CD8-positive, alpha-beta T cell (primary cell): ENCODE measurements at regions of chr9 and their contacts with region 1.

Region 1: DNA sequence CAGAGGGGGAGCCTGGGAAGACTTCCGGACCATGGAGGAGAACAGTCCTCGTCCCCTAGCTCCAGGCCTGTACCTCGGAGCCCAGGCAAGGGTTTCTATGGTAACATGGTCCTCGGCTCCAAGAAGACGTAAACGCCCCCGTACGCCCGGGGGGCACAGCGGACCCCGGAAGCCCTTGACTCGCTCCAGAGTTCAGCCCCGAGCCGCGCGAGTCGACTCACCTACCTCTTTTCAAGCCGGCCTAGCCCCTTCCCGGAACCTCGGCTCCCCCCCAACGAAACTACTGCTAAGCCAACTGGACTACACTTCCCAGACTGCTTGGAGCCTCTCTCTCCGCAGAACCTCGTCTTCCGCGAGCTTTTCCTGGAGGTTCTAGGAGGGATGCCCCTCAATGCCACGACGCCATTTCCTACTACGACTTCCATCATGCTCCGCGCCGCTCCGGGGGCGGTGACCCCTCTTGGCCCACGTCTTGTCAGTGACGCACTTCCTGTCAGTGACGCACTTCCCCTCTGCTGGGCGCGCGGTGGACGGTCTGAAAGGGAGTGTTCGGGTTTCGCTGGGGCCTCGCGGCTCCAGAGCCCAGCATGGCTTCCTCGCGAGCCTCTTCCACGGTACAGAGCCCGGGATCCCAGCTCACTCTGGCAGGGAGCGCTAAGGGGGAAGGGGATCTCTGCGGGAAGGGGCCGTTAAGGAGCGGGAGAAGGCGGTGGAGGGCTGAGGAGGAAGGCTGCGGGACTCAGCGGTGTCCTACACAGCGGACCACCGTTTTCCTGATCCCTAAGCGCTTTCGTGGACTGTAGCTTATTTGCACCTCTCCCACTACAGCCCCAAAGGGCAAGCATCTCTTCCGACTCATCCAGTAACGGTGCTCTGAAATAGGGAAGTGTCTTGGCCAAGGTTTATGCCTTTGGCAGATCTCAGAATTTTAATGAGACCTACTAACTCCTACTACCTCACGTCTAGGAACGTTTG is at the starts of genes CDC26 and PRPF4:
- DNase-seq: peak; percentile 87 to 99 (median 95)
- ATAC-seq: peak; percentile 89
- H3K4me3 ChIP-seq: peak within 1 kb of the TSS; percentile 78 to 97
- H3K4me3 Mint-ChIP-seq: no peak within 1 kb of the TSS
- H3K27ac ChIP-seq: peak within 1 kb of the TSS; percentile 92 to 97
- H3K27ac Mint-ChIP-seq: no peak within 1 kb of the TSS
- H3K4me1 ChIP-seq: peaks cover 12% of the 10 kb centered on the region
- H3K4me1 Mint-ChIP-seq: peaks cover 46% of the 10 kb centered on the region
- H3K27me3 ChIP-seq: no peaks in the 10 kb centered on the region
- H3K27me3 Mint-ChIP-seq: no peaks in the 10 kb centered on the region
- CTCF ChIP-seq: no peak
- total RNA-seq, gene CDC26: 13.1 TPM
- total RNA-seq, gene PRPF4: 24.4 to 24.8 TPM

Region 2: DNA sequence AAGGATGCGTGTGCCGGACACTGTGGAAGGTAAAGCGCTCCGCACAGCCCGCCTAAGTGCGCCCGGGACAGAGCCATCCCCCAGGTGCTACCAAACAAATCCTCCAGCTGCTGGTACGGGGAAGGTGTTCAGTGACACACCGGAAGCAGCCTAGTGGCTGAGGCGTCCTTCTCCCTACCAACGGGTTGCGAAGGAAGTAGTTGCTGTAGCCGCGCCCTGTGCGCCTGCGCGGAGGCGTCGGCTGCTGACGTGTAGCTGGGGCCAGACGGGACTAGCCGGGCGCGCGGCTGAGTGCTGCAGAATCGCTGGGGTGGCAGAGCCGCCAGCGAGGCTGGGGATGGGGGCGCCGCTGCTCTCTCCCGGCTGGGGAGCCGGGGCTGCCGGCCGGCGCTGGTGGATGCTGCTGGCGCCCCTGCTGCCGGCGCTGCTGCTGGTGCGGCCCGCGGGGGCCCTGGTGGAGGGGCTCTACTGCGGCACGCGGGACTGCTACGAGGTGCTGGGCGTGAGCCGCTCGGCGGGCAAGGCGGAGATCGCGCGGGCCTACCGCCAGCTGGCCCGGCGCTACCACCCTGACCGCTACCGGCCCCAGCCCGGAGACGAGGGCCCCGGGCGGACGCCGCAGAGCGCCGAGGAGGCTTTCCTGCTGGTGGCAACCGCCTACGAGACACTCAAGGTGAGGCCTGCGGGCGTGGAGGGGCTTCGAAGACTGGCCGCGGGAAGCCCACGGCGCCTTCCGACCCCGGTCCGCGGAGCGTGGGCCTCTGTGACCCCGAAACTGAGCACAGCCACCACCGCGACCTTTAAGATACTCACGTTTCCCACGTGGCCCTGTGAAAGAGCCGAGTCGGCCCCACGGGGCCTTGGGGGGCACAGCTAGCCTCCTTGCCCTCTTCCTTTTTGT is 1644.1 kb before region 1 on chr9 and contains the start of gene DNAJC25:
- CTCF ChIA-PET with region 1: interaction called, 3 read pairs
- POLR2A ChIA-PET with region 1: no interaction called
- intact Hi-C with region 1: loop called in 1 of 2 experiments (anchors 5 kb)
- DNase-seq: peak; percentile 92 to 99 (median 96)
- ATAC-seq: peak; percentile 94
- H3K4me3 ChIP-seq: peak within 1 kb of the TSS; percentile 50 to 69
- H3K4me3 Mint-ChIP-seq: peak within 1 kb of the TSS; percentile 98
- H3K27ac ChIP-seq: peak within 1 kb of the TSS; percentile 78 to 80
- H3K27ac Mint-ChIP-seq: peak within 1 kb of the TSS; percentile 92
- H3K4me1 ChIP-seq: peaks cover 18% of the 10 kb centered on the region
- H3K4me1 Mint-ChIP-seq: peaks cover 47% of the 10 kb centered on the region
- H3K27me3 ChIP-seq: no peaks in the 10 kb centered on the region
- H3K27me3 Mint-ChIP-seq: no peaks in the 10 kb centered on the region
- CTCF ChIP-seq: no peak
- total RNA-seq, gene DNAJC25: 5.8 to 7.2 TPM

Region 3: DNA sequence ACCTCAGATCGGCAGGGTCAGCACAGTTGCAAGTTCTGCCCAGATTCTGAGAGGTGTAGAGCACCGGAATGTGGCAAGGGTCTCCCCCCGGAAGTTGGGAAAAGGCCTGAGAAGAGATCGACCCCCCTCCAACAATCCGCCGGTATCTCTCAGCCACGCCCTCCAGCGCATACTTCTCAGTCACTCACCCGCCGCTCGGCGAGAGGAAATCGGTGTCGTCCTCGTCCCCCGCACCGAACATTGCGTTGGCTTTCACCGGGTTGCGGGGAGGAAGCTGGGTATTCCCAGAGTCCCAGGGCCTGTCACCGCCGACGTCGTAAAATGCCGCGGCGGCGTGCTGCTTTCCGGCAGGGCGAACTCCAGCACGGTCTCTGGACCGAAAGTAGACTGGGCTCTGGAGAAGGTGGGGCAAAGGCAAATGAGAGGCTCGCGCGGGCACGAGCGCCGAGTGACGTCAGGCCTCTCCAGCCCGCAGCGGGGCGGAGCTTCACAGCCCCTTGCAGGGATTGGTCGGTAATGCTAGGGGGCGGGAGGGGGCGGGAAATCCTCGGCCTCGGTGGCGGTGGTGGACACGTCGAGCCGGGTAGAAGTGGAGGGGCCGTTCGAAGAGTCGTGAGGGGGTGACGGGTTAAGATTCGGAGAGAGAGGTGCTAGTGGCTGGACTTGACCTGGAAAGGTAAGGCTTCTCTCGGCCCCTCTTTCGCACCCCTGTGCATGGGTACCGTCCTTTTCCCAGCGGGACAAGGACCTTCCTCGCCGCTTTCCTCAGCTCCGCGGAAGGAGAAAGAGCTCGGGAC is 54.2 kb before region 1 on chr9 and contains the starts of genes FKBP15 and SLC31A1:
- CTCF ChIA-PET with region 1: interaction called, 5 read pairs
- POLR2A ChIA-PET with region 1: interaction called, 3 read pairs
- intact Hi-C with region 1: loop called (anchors 1 kb)
- DNase-seq: peak; percentile 91 to 99 (median 95)
- ATAC-seq: peak; percentile 99
- H3K4me3 ChIP-seq: peak within 1 kb of the TSS; percentile 84 to 94
- H3K4me3 Mint-ChIP-seq: peak within 1 kb of the TSS; percentile 95
- H3K27ac ChIP-seq: peak within 1 kb of the TSS; percentile 71 to 90
- H3K27ac Mint-ChIP-seq: peak within 1 kb of the TSS; percentile 94
- H3K4me1 ChIP-seq: peaks cover 22% of the 10 kb centered on the region
- H3K4me1 Mint-ChIP-seq: peaks cover 57% of the 10 kb centered on the region
- H3K27me3 ChIP-seq: no peaks in the 10 kb centered on the region
- H3K27me3 Mint-ChIP-seq: no peaks in the 10 kb centered on the region
- CTCF ChIP-seq: no peak
- total RNA-seq, gene FKBP15: 8.7 to 8.9 TPM
- total RNA-seq, gene SLC31A1: 8.7 to 9.6 TPM

Region 4: GRCh38 chr9:113340017-113340699 is 64.7 kb after region 1 on chr9 and contains the start of gene WDR31:
- CTCF ChIA-PET with region 1: interaction called, 13 read pairs
- POLR2A ChIA-PET with region 1: interaction called, 4 read pairs
- intact Hi-C with region 1: loop called (anchors 1 kb)
- DNase-seq: peak; percentile 58 to 90 (median 78)
- ATAC-seq: peak; percentile 99
- H3K4me3 ChIP-seq: peak within 1 kb of the TSS; percentile 70 to 83
- H3K4me3 Mint-ChIP-seq: peak within 1 kb of the TSS; percentile 83
- H3K27ac ChIP-seq: peak within 1 kb of the TSS in 1 of 2 experiments; percentile 46
- H3K27ac Mint-ChIP-seq: no peak within 1 kb of the TSS
- H3K4me1 ChIP-seq: peaks cover 19% of the 10 kb centered on the region
- H3K4me1 Mint-ChIP-seq: peaks cover 24% of the 10 kb centered on the region
- H3K27me3 ChIP-seq: peaks cover 0 to 3% of the 10 kb centered on the region in 2 experiments
- H3K27me3 Mint-ChIP-seq: peaks cover 2% of the 10 kb centered on the region
- CTCF ChIP-seq: no peak
- total RNA-seq, gene WDR31: 0.11 to 0.43 TPM

Region 5: DNA sequence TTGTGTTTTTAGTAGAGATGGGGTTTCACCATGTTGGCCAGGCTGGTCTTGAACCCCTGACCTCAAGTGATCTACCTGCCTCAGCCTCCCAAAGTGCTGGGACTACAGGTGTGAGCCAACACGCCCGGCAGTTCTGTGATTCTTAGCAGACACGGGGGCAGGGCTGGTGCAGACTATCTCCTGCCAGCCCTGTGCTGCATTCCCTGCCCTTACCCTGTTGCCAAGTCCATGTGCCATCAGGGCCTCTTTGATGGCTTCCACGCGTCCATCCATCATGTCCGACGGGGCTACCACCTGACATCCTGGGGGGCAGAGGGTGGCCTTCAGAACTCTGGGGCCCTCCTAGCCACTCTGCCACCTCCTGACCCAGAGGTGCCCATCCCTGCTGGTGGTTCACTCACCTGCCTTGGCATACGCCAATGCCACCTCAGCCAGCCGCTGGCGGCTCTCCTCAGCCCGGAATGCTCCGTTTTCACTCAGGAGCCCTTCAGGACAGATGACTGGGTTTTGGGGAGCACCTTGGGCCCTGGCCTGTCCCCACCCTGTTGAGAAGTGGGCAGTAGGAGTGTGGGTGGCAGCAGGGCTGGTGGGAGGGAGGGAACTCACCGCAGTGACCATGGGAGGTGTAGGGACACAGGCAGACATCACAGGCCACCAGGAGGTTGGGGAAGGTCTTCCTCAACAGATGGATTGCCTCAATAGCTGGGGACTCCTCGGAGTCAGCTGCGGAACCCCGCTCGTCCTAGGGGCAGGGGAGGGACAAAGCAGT is 114.9 kb after region 1 on chr9:
- CTCF ChIA-PET with region 1: no interaction called
- POLR2A ChIA-PET with region 1: no interaction called
- intact Hi-C with region 1: no loop called
- DNase-seq: no peak
- ATAC-seq: no peak
- H3K4me3 ChIP-seq: no peak overlapping the region
- H3K4me3 Mint-ChIP-seq: no peak overlapping the region
- H3K27ac ChIP-seq: no peak overlapping the region
- H3K27ac Mint-ChIP-seq: no peak overlapping the region
- H3K4me1 ChIP-seq: no peaks in the 10 kb centered on the region
- H3K4me1 Mint-ChIP-seq: no peaks in the 10 kb centered on the region
- H3K27me3 ChIP-seq: no peaks in the 10 kb centered on the region
- H3K27me3 Mint-ChIP-seq: no peaks in the 10 kb centered on the region
- CTCF ChIP-seq: no peak

Region 6: GRCh38 chr9:113410207-113410864 is 134.9 kb after region 1 on chr9 and contains the starts of genes C9orf43 and POLE3:
- CTCF ChIA-PET with region 1: interaction called, 32 read pairs
- POLR2A ChIA-PET with region 1: interaction called, 12 read pairs
- intact Hi-C with region 1: loop called (anchors 1 kb)
- DNase-seq: peak; percentile 90 to 97 (median 94)
- ATAC-seq: peak; percentile 88
- H3K4me3 ChIP-seq: peak within 1 kb of the TSS; percentile 88 to 94
- H3K4me3 Mint-ChIP-seq: peak within 1 kb of the TSS; percentile 99
- H3K27ac ChIP-seq: peak within 1 kb of the TSS; percentile 84 to 99
- H3K27ac Mint-ChIP-seq: peak within 1 kb of the TSS; percentile 99
- H3K4me1 ChIP-seq: peaks cover 22% of the 10 kb centered on the region
- H3K4me1 Mint-ChIP-seq: peaks cover 29% of the 10 kb centered on the region
- H3K27me3 ChIP-seq: no peaks in the 10 kb centered on the region
- H3K27me3 Mint-ChIP-seq: no peaks in the 10 kb centered on the region
- CTCF ChIP-seq: no peak
- total RNA-seq, gene C9orf43: 0.61 to 0.73 TPM
- total RNA-seq, gene POLE3: 77.4 to 79.3 TPM

Region 7: GRCh38 chr9:113523421-113524236 is 248.2 kb after region 1 on chr9:
- CTCF ChIA-PET with region 1: interaction called, 3 read pairs
- POLR2A ChIA-PET with region 1: no interaction called
- intact Hi-C with region 1: loop called (anchors 5 to 10 kb)
- DNase-seq: peak in 8 of 9 experiments; percentile 46 to 87 (median 66)
- ATAC-seq: peak; percentile 27
- H3K4me3 ChIP-seq: peak overlapping the region; percentile 31 to 40
- H3K4me3 Mint-ChIP-seq: peak overlapping the region; percentile 80
- H3K27ac ChIP-seq: peak overlapping the region; percentile 19 to 78
- H3K27ac Mint-ChIP-seq: peak overlapping the region; percentile 94
- H3K4me1 ChIP-seq: peaks cover 97% of the 10 kb centered on the region
- H3K4me1 Mint-ChIP-seq: peaks cover 92% of the 10 kb centered on the region
- H3K27me3 ChIP-seq: no peaks in the 10 kb centered on the region
- H3K27me3 Mint-ChIP-seq: no peaks in the 10 kb centered on the region
- CTCF ChIP-seq: no peak

Region 8: DNA sequence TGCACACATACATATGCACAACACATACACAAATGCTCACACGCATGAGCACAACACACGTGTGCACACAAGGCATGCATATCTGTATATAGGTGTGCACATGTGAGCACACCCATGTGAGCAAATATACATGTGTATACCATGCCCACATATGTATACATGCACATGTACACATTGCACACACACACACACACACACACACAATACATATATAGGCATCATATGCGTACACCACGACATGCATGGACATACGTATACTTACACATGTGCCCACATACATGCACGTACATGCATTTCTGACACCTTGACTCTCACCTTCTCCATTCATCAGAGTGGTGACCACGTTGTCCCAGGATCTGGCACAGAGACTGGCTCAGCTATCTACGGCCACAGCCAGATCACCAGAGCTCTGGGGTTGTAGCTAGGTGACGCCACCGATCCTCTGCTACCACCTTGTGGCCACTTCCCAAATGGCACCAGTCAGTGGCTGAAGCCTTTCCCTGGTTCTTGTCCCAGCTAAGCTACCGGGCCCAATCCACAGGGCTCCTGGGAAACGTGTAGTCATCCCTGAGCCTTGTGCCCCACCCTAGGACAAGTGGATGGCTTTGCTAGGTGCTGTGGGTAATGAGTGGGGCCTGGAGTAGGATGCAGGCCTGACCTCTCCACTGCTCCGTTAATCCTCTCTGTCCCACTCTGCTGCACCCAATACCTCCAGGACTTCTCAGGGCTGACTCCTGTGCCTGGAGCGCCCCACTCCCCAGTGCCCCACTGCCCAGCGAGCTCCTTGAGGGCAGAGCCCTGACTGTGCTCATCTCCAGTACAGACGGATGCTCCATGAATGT is 382.5 kb after region 1 on chr9:
- CTCF ChIA-PET with region 1: interaction called, 103 read pairs
- POLR2A ChIA-PET with region 1: interaction called, 4 read pairs
- intact Hi-C with region 1: loop called (anchors 1 kb)
- DNase-seq: peak; percentile 61 to 86 (median 81)
- ATAC-seq: peak; percentile 94
- H3K4me3 ChIP-seq: no peak overlapping the region
- H3K4me3 Mint-ChIP-seq: no peak overlapping the region
- H3K27ac ChIP-seq: no peak overlapping the region
- H3K27ac Mint-ChIP-seq: no peak overlapping the region
- H3K4me1 ChIP-seq: no peaks in the 10 kb centered on the region
- H3K4me1 Mint-ChIP-seq: peaks cover 2% of the 10 kb centered on the region
- H3K27me3 ChIP-seq: no peaks in the 10 kb centered on the region
- H3K27me3 Mint-ChIP-seq: peaks cover 11% of the 10 kb centered on the region
- CTCF ChIP-seq: peak; percentile 89

Region 9: GRCh38 chr9:113857875-113858274 is 582.4 kb after region 1 on chr9:
- CTCF ChIA-PET with region 1: no interaction called
- POLR2A ChIA-PET with region 1: no interaction called
- intact Hi-C with region 1: no loop called
- DNase-seq: no peak
- ATAC-seq: no peak
- H3K4me3 ChIP-seq: no peak overlapping the region
- H3K4me3 Mint-ChIP-seq: no peak overlapping the region
- H3K27ac ChIP-seq: no peak overlapping the region
- H3K27ac Mint-ChIP-seq: no peak overlapping the region
- H3K4me1 ChIP-seq: no peaks in the 10 kb centered on the region
- H3K4me1 Mint-ChIP-seq: no peaks in the 10 kb centered on the region
- H3K27me3 ChIP-seq: peaks cover 0 to 4% of the 10 kb centered on the region in 2 experiments
- H3K27me3 Mint-ChIP-seq: peaks cover 33% of the 10 kb centered on the region
- CTCF ChIP-seq: no peak